ENCODE measurements at regions of chr1 and their contacts with region 1.

Region 1: GRCh38 chr1:204506961-204507387 is 9.2 kb upstream of the MDM4 start:
- DNase-seq: peak; percentile 97
- H3K4me3 Mint-ChIP-seq: peak overlapping the region; percentile 94
- H3K27ac Mint-ChIP-seq: peak overlapping the region; percentile 99
- H3K4me1 Mint-ChIP-seq: peaks cover 27% of the 10 kb centered on the region
- H3K27me3 Mint-ChIP-seq: peaks cover 2% of the 10 kb centered on the region

Region 2: GRCh38 chr1:204411451-204412204 is 95.3 kb before region 1 on chr1 and contains the start of gene PPP1R15B:
- intact Hi-C with region 1: loop called (anchors 1 kb)
- DNase-seq: peak; percentile 99
- H3K4me3 Mint-ChIP-seq: peak within 1 kb of the TSS; percentile 97
- H3K27ac Mint-ChIP-seq: peak within 1 kb of the TSS; percentile 99
- H3K4me1 Mint-ChIP-seq: peaks cover 9% of the 10 kb centered on the region
- H3K27me3 Mint-ChIP-seq: no peaks in the 10 kb centered on the region
- total RNA-seq, gene PPP1R15B: 70.9 and 74.0 TPM in 2 replicates

Region 3: GRCh38 chr1:204431310-204432165 is 75.4 kb before region 1 on chr1:
- intact Hi-C with region 1: loop called (anchors 1 kb)
- DNase-seq: peak; percentile 92
- H3K4me3 Mint-ChIP-seq: no peak overlapping the region
- H3K27ac Mint-ChIP-seq: no peak overlapping the region
- H3K4me1 Mint-ChIP-seq: peaks cover 2% of the 10 kb centered on the region
- H3K27me3 Mint-ChIP-seq: no peaks in the 10 kb centered on the region

Region 4: GRCh38 chr1:204446370-204447111 is 60.4 kb before region 1 on chr1:
- intact Hi-C with region 1: loop called (anchors 1 kb)
- DNase-seq: peak; percentile 92
- H3K4me3 Mint-ChIP-seq: no peak overlapping the region
- H3K27ac Mint-ChIP-seq: peak overlapping the region; percentile 65
- H3K4me1 Mint-ChIP-seq: peaks cover 36% of the 10 kb centered on the region
- H3K27me3 Mint-ChIP-seq: no peaks in the 10 kb centered on the region

Region 5: GRCh38 chr1:204475656-204476432 is 31.1 kb before region 1 on chr1:
- intact Hi-C with region 1: no loop called
- DNase-seq: no peak
- H3K4me3 Mint-ChIP-seq: no peak overlapping the region
- H3K27ac Mint-ChIP-seq: no peak overlapping the region
- H3K4me1 Mint-ChIP-seq: peaks cover 37% of the 10 kb centered on the region
- H3K27me3 Mint-ChIP-seq: no peaks in the 10 kb centered on the region

Region 6: DNA sequence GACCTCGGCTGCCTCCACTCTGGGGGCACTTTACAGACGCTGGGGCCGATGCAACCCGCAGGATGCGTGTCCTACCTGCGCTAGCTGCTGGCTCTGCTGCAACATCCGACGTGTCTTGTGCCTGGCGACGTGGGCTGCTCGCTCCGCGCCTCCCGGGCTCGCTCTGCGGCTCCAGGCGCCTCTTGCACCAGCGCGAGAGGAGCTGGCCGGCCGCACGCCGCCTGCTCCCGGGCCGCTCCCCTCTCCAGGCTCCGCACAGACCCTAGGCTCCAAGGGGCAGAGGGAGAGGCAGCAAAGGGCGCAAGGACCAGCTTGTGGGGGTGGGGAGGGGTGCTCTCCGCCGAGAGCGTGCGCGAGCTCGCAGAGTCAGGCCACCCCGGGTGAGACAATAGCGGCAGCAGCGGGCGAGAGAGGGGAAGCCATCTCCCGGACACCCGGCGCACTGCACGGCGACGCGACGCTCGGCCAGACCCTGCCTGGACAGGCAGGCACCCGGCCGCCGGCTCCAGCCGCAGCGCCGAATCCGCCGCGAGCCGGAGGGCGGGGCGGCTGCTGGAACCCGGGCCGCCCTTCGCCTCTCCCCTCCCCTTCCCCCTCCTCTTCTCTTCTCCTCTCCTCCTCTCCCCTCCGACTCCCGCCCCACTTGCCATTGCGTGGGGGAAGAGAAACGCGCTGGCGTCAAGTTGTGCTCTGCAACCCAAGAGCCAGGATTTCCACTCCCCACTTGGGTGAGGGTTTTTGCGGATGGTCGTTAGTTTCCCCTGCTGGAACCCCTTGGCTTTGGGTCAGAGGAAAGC is 12.5 kb before region 1 on chr1 and contains the start of gene PIK3C2B:
- intact Hi-C with region 1: loop called (anchors 1 kb)
- DNase-seq: peak; percentile 92
- H3K4me3 Mint-ChIP-seq: peak within 1 kb of the TSS; percentile 98
- H3K27ac Mint-ChIP-seq: peak within 1 kb of the TSS; percentile 96
- H3K4me1 Mint-ChIP-seq: peaks cover 45% of the 10 kb centered on the region
- H3K27me3 Mint-ChIP-seq: peaks cover 2% of the 10 kb centered on the region
- total RNA-seq, gene PIK3C2B: 22.7 and 23.6 TPM in 2 replicates

Region 7: DNA sequence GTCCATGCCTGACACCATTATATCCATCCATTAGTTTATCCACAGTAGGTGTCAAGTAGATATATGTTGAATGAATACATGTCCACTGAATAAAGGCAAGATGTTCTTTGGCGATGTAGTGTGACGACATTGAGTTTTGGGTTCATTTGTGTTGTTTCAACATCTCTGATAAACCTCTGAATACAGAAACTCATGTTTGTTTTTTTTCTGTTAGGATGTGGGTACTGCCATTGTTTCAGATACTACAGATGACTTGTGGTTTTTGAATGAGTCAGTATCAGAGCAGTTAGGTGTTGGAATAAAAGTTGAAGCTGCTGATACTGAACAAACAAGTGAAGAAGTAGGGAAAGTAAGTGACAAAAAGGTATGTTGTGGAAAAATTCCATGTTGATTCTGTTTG is 37.3 kb after region 1 on chr1:
- intact Hi-C with region 1: loop called (anchors 5 kb)
- DNase-seq: peak; percentile 76
- H3K4me3 Mint-ChIP-seq: peak overlapping the region; percentile 55
- H3K27ac Mint-ChIP-seq: peak overlapping the region; percentile 68
- H3K4me1 Mint-ChIP-seq: peaks cover 53% of the 10 kb centered on the region
- H3K27me3 Mint-ChIP-seq: no peaks in the 10 kb centered on the region

Region 8: DNA sequence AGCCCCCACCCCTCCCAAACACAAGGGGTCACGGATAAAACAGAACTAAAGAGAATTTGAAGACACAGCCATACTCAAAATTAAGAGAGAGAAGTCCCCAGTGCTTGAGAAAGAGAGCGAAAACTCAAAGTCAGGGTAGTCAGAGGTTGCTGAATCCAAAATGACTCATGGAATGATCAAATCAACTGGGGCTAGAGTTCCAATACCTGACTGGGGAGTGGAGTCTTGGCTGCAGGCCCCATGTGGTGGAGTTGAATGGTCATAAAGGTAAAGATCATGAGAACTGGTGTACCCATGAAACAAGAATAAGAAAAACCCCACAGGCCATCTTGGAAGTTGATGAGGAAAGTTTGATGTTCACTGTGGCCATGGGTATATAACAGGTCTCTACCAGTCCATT is 263.0 kb after region 1 on chr1:
- intact Hi-C with region 1: no loop called
- DNase-seq: no peak
- H3K4me3 Mint-ChIP-seq: no peak overlapping the region
- H3K27ac Mint-ChIP-seq: no peak overlapping the region
- H3K4me1 Mint-ChIP-seq: no peaks in the 10 kb centered on the region
- H3K27me3 Mint-ChIP-seq: peaks cover 60% of the 10 kb centered on the region

Region 9: DNA sequence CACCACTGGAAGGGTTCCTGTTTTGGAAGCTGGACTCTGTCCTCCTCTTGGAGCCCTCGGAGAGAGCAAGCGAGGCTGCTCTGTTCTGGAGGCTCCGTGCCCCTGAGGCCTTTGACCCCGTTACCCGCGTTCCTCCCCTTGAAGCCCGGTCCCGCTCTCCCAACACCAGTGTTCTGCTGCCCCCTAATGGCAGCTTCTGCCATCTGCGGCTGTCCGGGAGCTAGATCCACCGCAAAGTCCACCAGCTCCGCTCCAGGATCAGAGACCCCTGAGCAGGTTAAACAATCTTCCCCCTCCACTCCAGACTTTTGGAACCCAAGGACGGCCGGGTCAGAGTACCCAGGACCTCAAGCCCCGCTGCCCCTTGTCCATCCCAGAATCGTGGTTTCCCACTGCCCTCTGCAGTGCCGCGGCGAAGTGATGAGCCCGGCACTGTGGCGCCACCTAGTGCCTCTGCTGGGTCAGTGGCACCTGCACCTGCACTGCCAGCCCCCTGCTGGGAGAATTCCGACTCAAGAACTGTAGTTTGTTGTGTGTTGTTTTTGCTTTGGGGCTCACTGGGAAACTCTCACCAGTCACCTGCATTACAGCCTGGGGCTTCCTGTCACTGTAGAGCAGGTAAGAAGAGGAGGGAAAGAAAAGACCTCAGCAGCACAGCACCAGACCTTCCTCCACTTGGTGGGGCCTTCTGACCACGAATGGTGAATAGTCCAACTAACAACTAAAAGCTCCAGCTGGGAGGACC is 300.1 kb after region 1 on chr1:
- intact Hi-C with region 1: loop called (anchors 2 kb)
- DNase-seq: peak; percentile 95
- H3K4me3 Mint-ChIP-seq: peak overlapping the region; percentile 89
- H3K27ac Mint-ChIP-seq: peak overlapping the region; percentile 61
- H3K4me1 Mint-ChIP-seq: peaks cover 6% of the 10 kb centered on the region
- H3K27me3 Mint-ChIP-seq: peaks cover 16% of the 10 kb centered on the region